Mammary epithelial cell (primary cell): ENCODE measurements at regions of chr2 and their contacts with region 1.

Region 1: DNA sequence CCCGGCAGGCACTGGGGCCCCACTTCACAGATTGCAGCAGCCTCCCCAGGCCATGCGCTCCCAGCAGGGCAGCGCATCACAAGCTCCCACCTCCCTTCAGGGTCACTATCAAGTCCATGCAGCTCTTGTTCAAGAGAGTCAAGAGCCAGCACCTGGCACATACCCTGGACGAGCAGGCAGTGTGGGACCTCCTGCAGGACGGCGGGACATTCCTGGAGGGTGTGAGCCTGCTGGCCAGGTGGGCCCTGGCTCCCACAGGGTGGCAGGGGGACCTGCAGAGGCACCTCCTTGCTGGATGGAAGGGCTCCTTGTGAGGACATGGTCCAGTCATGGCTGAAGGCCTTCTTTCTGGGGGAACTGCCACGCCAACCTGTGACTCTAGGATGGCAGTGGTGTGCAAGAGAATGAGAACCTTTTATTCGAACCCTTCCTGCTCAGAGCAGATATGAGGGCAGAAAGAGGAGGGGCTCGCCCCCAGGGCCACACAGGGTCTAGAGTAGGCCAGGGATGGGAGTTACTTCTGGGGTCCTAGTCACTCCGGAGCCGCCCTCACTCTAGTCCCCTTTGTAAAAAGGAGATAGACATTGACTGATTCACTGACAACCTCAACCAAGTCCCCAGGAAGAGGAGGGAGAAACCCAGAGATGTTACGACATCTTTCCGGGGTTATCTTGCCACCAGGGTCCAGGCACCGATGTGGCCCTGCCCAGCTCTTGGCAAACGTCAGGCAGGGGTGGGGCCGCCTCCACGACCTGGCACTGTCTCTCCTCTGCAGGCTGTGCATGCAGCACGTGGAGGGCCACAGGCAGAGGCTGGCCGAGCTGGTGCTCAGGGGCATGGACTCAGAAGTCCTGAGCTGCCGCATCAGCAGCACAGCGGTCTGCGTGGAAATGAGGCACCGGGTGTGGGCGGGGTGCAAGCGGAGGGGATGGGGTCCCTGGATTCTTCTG is 31.3 kb downstream of the HJURP start:
- DNase-seq: no peak
- H3K4me3 ChIP-seq: no peak overlapping the region
- H3K27ac ChIP-seq: no peak overlapping the region
- H3K4me1 ChIP-seq: peaks cover under 1% of the 10 kb centered on the region
- H3K27me3 ChIP-seq: no peaks in the 10 kb centered on the region
- CTCF ChIP-seq: no peak

Region 2: DNA sequence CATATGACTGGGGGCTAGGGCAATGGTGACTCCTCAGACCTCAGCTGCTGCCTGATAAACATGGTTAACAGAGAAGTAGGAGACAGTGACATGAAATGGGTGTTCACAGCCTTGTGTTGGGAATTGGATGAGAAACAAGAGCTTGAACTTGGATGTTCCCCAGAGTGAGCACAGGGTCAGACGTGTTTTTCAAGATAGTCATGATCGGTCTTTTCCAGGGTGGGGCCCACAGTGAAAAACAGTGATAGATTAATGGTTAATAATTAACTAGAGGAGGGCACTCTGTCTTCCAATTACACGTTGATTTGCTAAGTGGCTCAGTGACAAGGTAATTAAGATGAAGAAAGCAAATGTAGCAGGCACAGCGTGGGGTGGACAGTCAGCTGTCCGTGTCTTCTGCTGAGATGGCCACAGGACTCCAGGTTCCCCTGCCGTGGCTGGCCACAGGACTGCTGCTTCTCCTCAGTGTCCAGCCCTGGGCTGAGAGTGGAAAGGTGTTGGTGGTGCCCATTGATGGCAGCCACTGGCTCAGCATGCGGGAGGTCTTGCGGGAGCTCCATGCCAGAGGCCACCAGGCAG is 94.2 kb before region 1 on chr2 and contains the start of gene UGT1A3:
- CTCF ChIA-PET with region 1: no interaction called
- dilution Hi-C with region 1: loop called (anchors 10 kb)
- in situ Hi-C with region 1: no loop called
- intact Hi-C with region 1: no loop called
- DNase-seq: no peak
- H3K4me3 ChIP-seq: no peak within 1 kb of the TSS
- H3K27ac ChIP-seq: no peak within 1 kb of the TSS
- H3K4me1 ChIP-seq: no peaks in the 10 kb centered on the region
- H3K27me3 ChIP-seq: peaks cover 2% of the 10 kb centered on the region
- CTCF ChIP-seq: no peak
- total RNA-seq, gene UGT1A3: 0.40 to 0.67 TPM